ENCODE measurements at regions of chr6 and their contacts with region 1.

Region 1: DNA sequence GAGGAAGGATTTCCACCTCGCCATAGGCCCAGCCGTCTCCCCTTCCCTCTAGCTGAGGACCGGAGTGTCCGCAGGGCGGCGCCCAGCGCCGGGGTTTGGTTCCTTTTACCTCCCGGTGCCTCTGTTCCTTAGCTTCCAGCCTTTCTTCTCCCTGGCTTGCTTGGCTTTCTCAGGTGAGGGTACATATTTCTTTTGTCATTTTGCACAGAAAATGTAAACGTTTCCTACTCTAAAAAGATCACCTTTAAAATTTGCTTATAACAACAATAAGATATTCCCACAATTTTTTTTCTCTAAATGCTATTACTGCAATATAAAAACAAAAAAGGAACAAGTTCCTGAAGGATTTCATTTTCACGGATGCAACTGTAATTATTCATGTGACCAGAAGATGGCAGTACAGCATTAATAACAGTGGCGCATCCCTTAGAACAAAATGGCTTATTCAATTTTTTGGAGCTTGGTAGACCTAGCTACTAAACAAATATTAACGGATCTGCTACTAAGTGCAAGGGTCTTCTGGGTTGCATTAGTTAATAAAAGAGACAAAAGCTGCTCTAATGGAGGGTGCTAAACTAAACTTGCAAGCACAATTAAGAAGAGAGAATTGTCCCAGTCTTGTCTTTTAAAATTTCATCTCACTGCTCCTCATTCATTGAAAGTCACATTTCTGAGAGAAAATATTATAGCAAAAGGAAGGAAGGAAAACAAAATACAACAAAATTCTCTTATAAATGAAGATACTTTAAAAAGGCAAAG is 172.9 kb downstream of the ADGRG6 start:
- DNase-seq: peak in 1 of 2 donors; percentile 27
- ATAC-seq: peak; percentile 42

Region 2: DNA sequence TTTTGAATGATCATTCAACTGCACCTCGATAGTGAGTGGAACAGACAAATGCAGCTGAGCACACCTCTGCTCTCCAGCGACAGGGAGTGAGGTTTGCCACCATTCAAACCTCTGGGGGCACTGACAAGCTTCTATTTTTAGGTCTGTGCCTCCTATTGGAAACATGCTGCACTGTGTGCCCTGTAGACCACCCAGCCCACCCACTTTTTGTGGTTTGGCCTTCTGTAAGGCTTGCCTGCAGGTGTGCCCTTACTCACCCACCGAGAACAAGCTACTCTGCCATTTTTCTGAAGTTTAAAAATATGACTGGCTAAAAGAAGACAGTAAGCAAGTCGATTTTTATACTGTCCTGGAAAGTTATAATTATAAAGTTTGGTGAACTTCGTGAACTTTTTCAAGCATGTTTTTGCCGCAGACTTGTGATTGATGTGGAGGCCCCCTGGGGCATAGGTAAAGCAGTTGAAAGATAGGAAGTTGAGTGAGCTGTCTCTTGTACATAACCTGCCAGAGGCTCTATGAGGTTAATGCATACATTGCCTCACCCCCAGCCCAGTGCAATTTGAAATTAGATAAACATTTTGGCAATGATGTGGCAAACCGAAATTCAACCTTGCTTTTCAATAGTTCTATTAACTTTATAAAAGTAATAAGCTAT is 119.1 kb before region 1 on chr6:
- intact Hi-C with region 1: no loop called
- DNase-seq: no peak
- ATAC-seq: no peak

Region 3: DNA sequence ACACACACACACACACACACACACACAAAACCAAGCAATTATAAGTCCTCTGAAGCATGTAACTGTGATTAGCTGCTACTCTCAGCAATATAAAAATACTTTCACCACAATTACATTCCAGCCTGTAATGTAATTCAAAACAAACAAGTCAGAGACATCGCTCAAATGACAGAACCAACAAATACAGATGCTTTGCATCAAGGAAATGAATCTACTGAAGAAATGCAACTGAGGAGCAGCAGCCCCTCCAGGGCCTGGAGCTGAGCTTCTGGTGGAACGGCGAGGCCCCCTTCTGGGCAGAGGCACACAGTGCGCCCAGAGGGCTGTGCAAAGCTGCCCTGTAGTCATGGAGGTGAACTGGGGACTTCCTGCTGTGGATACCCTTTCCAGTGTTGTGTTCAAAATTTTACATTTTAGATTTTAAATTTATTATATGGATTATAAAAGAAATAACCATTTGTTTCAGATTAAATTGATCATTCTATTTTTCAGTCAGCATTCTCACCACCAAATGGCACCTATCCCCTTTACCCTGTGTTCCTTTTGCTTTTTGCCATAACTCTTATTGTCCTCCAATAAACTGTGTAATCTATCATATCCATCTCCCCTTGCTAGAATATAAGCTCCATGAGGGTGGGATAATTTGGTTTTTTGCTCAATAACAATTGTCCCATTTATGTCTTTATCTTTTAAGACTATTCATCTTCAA is 952.6 kb after region 1 on chr6:
- intact Hi-C with region 1: loop called in 1 of 2 experiments (anchors 10 kb)
- DNase-seq: peak; percentile 32 to 69
- ATAC-seq: peak; percentile 94

Measured in left colon (tissue), 2 donors.